Activated CD8-positive, alpha-beta memory T cell treated with anti-CD3 and anti-CD28 coated beads, Interleukin-2, amount 10 ng/mL, durations not matched to agents 7 days and 5 days (primary cell): ENCODE measurements at regions of chr20 and their contacts with region 1.

Region 1: GRCh38 chr20:45322952-45323383 is 14.9 kb upstream of the MATN4 start:
- DNase-seq: no peak
- ATAC-seq: no peak
- H3K4me3 Mint-ChIP-seq: no peak overlapping the region
- H3K27ac Mint-ChIP-seq: no peak overlapping the region
- H3K4me1 Mint-ChIP-seq: peaks cover 35% of the 10 kb centered on the region
- H3K27me3 Mint-ChIP-seq: no peaks in the 10 kb centered on the region

Region 2: DNA sequence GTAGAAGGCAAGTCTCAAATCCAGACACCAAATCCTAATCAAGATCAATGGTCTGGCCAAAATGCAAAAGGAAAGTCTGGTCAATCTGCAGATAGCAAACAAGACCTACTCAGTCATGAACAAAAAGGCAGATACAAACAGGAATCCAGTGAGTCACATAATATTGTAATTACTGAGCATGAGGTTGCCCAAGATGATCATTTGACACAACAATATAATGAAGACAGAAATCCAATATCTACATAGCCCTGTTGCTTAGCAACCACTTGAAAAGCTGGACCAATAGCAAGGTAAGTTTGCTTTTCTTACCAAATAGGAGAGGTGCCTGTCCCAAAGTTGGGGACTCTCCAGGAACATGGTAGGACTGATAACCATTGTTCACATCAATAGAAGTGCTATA is 99.8 kb before region 1 on chr20:
- CTCF ChIA-PET with region 1: no interaction called
- DNase-seq: no peak
- ATAC-seq: no peak
- H3K4me3 Mint-ChIP-seq: no peak overlapping the region
- H3K27ac Mint-ChIP-seq: no peak overlapping the region
- H3K4me1 Mint-ChIP-seq: no peaks in the 10 kb centered on the region
- H3K27me3 Mint-ChIP-seq: peaks cover 55% of the 10 kb centered on the region

Region 3: DNA sequence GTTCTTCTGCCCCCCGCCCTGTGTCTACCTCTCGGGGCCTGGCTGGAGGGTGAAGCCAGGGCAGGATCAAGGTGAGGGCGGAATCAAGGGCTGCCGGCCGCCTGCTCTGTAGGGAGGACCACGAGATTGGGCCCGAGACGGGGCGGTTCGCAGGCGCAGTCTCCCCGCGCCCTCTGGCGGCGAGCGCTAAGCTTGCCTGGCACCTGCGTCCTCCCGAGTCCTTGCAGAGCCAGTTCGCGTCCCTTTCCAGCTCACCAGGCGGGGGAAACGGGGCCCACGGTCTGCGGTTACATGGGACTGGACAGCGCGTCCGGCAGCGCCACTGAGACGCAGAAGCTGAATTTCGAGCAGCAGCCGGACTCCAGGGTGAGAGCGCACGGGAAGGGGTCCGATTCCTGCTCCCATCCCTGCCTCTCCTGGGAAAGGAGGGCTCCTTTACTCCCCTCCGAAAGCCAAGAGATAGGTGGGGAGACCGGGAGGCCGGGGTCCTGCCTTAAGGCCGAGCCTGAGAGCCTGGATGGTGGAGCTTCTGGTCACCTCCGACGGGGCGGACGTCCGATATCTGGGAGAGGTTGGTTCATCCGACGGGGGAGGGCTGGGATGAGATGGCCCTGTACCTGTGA is 11.3 kb before region 1 on chr20:
- CTCF ChIA-PET with region 1: interaction called, 13 read pairs
- DNase-seq: peak; percentile 77
- ATAC-seq: peak; percentile 79
- H3K4me3 Mint-ChIP-seq: no peak overlapping the region
- H3K27ac Mint-ChIP-seq: no peak overlapping the region
- H3K4me1 Mint-ChIP-seq: peaks cover 17% of the 10 kb centered on the region
- H3K27me3 Mint-ChIP-seq: peaks cover 43% of the 10 kb centered on the region

Region 4: DNA sequence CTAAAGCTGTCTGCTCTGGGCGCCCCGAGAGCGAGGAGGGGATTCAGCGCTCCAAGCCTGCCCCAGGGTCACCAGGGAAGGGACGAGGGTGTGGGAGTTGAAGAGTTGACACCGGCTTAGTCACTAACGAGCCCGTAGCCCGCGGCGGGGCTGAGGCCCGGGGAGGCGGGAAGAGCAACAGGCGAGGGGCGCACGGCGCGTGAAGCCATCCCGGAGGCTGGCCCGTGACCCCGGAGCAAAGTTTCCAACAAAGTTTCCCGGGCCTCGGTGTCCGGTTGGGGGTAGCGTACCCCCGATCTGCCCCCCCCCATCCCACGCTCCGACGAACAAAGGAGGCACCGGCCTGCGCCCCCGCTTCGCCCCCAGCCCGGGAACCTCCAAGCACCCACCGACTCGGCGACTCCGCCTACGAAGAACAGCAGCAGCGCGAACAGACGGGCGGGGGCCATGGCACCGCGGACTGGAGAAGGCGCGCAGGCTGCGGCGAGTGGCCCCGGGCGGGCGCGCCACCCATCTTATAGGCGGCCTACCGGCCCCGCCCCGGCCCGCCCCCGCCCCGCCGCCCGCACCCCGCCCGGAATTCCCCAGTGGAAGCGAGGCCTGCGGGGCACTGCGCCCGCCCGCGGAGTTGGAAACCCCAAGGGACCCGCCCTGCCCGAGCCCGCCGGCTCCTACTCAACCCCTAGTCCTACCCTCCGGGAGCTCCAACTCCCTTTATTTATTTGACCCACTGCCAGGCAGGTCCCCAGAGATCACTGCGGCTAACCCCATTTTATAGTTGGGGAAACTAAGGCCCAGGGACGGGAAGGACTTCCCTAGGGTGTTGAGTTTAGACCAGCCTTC is 25.2 kb after region 1 on chr20 and contains the start of gene SDC4:
- CTCF ChIA-PET with region 1: interaction called, 33 read pairs
- DNase-seq: peak; percentile 72
- ATAC-seq: peak; percentile 91
- H3K4me3 Mint-ChIP-seq: peak within 1 kb of the TSS; percentile 77
- H3K27ac Mint-ChIP-seq: peak within 1 kb of the TSS; percentile 67
- H3K4me1 Mint-ChIP-seq: peaks cover 40% of the 10 kb centered on the region
- H3K27me3 Mint-ChIP-seq: no peaks in the 10 kb centered on the region
- total RNA-seq, gene SDC4: 15.0 to 50.7 TPM

Region 5: DNA sequence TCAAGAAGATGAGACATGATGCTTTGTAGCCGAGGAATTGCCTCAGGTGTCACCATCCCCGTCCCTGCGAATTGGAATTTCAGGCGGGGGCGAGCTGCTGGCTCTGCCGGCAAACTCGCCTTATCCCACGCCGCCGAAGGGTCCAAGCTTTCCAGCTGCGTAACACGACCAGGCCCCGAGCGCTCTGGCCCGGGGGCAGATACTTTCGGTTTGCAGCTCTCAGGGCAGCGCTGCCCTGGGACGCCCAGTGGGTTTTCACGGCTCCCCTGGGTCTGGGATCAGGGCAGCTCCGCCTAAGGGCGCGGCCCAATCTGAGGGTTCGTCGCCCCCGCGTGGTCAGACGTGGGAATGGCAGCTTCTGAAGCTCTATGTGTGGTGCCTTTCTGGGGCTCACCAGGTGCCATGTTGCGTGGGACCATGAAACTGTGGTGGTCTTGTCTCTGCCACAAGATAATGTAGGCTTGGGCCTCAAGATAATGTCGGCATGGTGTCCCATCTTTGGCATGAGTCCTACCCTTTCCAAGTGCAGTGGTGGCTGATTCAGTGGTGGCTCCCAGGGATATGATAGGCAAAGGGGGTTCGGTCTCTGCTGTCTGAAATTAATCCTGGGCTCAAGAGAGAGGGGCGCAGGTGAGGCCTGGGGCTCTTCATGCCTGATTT is 113.9 kb after region 1 on chr20:
- CTCF ChIA-PET with region 1: interaction called, 81 read pairs
- DNase-seq: peak; percentile 91
- ATAC-seq: peak; percentile 100
- H3K4me3 Mint-ChIP-seq: peak overlapping the region; percentile 81
- H3K27ac Mint-ChIP-seq: peak overlapping the region; percentile 58
- H3K4me1 Mint-ChIP-seq: peaks cover 25% of the 10 kb centered on the region
- H3K27me3 Mint-ChIP-seq: no peaks in the 10 kb centered on the region